K562 (cell line): ENCODE measurements at regions of chr7 and their contacts with region 1.

Region 1: GRCh38 chr7:20778063-20778721 is 8.5 kb downstream of the SP8 start:
- DNase-seq: peak in 3 of 4 experiments; percentile 28 to 37 (median 36)
- ATAC-seq: peak; percentile 98
- H3K4me3 ChIP-seq: no peak overlapping the region
- H3K27ac ChIP-seq: no peak overlapping the region
- H3K4me1 ChIP-seq: peaks cover 0 to 12% of the 10 kb centered on the region in 2 experiments; a peak in 1 of 5 replicates
- H3K27me3 ChIP-seq: peaks cover 21 to 29% of the 10 kb centered on the region in 2 experiments
- CTCF ChIP-seq: peak; percentile 40 to 65 (median 51); a peak in 4 of 6 replicates
- EP300 ChIP-seq: no peak
- POLR2A ChIP-seq: no peak
- RAD21 ChIP-seq: peak; percentile 59 to 75

Region 2: DNA sequence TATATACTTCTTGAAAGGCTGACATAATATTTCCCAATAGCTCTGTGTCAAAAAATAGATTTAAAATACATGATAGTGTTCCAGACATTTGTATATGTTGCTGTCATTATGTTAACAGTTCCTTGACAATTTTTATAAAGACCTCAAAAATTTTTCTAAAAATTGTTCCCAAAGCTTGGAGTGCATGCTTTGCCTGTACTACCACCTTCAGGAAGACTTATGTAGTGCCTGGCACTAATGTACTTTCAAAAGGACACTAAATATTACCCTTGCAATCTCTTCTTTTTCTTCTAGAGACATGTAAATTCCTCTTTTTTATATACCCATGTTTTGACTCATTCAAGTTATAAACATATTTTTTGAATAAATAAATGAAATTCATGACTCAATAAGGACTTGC is 56.5 kb after region 1 on chr7:
- CTCF ChIA-PET with region 1: no interaction called
- POLR2A ChIA-PET with region 1: no interaction called
- in situ Hi-C with region 1: no loop called
- intact Hi-C with region 1: loop called (anchors 2 kb)
- DNase-seq: peak; percentile 9 to 23 (median 13)
- ATAC-seq: peak; percentile 68
- H3K4me3 ChIP-seq: no peak overlapping the region
- H3K27ac ChIP-seq: no peak overlapping the region
- H3K4me1 ChIP-seq: peaks cover 0 to 8% of the 10 kb centered on the region in 2 experiments; a peak in 1 of 5 replicates
- H3K27me3 ChIP-seq: no peaks in the 10 kb centered on the region
- CTCF ChIP-seq: peak; percentile 14 to 55 (median 40); a peak in 3 of 6 replicates
- EP300 ChIP-seq: no peak
- POLR2A ChIP-seq: no peak
- RAD21 ChIP-seq: peak; percentile 47 to 57; a peak in 3 of 4 replicates

Region 3: DNA sequence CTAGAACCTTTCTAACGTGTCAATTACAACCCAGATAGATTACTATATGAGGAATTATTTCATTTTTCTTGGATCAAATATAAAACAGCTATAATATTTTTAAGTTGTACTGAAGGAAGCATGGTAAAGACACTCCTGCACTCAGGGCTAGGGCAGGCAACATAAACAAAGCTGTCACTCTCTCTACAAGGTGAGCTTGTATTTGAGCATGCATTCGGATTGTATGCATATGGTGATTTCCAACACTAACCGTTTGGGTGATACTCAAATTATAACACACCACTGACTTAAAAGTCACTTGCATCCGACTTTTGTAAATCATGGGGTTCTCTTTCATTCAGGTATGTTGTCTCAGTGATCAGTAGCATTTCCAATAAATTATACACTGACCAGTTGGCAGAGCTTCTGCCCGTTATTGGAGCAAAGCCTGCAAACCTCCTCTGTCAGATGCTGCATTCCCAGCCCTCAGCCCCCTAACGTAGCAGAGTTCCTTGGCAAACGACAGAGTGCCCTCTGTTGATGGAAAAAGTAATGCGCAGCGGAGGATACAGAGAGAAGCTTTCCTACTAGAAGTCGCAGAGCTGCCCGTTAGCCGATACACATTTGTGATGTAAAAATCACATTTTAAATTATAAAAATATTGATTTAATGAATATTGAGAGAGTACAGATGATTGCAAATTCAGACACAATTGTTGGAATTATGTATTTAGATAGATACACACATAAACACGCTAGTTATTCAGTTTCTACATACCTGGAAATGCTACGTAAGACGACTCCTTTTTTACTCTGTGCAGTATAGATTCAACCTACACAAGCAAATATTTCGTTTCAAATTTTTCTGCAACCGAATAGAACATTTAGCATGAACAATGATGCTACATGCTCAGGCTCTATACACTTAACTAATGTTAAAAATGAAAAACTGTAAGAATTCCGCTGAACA is 475.8 kb after region 1 on chr7:
- CTCF ChIA-PET with region 1: interaction called, 3 read pairs
- POLR2A ChIA-PET with region 1: no interaction called
- in situ Hi-C with region 1: loop called (anchors 10 kb)
- intact Hi-C with region 1: loop called (anchors 2 kb)
- DNase-seq: peak; percentile 10 to 66 (median 24)
- ATAC-seq: peak; percentile 96
- H3K4me3 ChIP-seq: no peak overlapping the region
- H3K27ac ChIP-seq: no peak overlapping the region
- H3K4me1 ChIP-seq: no peaks in the 10 kb centered on the region
- H3K27me3 ChIP-seq: peaks cover 0 to 2% of the 10 kb centered on the region in 2 experiments; a peak in 2 of 5 replicates
- CTCF ChIP-seq: peak; percentile 60 to 66 (median 62)
- EP300 ChIP-seq: no peak
- POLR2A ChIP-seq: no peak
- RAD21 ChIP-seq: peak; percentile 61 to 65

Region 4: DNA sequence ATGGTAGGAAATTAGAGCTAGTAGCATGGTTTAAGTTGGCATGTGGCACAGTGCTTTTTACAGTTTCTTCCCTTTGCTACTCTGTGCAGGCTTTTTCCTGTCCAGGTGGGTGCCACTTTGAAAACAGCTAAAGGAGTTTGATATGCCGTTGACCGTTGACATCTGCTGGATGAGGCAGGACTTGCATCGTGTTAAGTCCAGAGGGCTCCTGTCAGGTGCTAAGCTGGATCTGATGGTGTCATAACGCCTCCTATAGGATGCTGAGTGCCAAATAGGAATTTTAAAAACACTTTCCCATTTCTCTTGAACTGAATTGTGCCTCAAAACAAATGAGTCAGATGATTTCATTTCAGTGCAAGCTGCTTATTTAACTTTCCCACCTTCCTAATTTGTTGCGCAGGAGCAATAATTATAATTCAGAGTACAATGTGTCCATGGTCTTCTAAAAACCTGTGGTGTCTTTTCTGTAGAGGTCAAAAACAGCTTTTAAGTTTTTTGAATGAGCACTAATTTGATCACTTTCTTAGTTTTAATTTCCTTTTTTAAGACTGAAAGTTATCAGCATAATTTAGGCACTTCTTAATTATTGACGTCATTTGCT is 989.2 kb after region 1 on chr7:
- CTCF ChIA-PET with region 1: no interaction called
- POLR2A ChIA-PET with region 1: interaction called, 3 read pairs
- in situ Hi-C with region 1: no loop called
- intact Hi-C with region 1: loop called (anchors 5 kb)
- DNase-seq: peak; percentile 37 to 74 (median 52)
- ATAC-seq: peak; percentile 98
- H3K4me3 ChIP-seq: no peak overlapping the region
- H3K27ac ChIP-seq: no peak overlapping the region
- H3K4me1 ChIP-seq: peaks cover 0 to 3% of the 10 kb centered on the region in 2 experiments; a peak in 1 of 5 replicates
- H3K27me3 ChIP-seq: peaks cover 0 to 2% of the 10 kb centered on the region in 2 experiments; a peak in 1 of 5 replicates
- CTCF ChIP-seq: peak; percentile 78 to 96 (median 95)
- EP300 ChIP-seq: no peak
- POLR2A ChIP-seq: no peak
- RAD21 ChIP-seq: peak; percentile 61 to 78